ENCODE measurements at regions of chr6 and their contacts with region 1.

Region 1: DNA sequence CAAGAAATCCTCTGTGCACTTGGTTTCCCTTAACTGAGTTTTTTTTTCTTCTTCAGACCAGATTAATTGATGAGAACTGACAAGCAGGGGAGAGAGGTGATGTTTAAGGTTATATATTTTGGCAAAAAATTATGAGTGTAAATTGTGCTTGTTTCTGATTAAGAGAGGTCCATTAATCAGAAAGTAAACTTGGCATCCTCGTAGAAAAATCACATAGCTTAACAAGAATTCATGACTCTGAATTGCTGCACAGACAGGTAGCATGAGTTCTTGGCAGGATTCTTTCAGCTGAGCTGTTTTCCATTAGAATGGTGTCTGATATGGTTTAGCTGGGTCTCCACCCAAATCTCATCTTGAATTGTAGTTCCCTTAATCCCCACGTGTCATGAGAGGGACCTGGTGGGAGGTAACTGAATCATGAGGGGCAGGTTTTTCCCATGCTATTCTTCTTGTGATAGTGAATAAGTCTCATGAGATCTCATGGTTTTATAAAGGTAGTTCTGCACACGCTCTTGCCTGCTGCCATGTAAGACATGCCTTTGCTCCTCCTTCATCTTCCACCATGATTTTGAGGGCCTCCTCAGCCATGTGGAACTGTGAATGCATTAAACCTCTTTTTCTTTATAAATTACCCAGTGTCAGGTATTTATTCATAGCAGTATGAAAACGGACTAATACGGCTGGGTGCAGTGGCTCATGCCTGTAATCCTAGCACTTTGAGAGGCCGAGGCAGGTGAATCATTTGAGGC is 34.2 kb upstream of the DDR1 start:
- DNase-seq: no peak
- ATAC-seq: no peak
- H3K4me3 Mint-ChIP-seq: no peak overlapping the region
- H3K27ac Mint-ChIP-seq: no peak overlapping the region
- H3K4me1 Mint-ChIP-seq: no peaks in the 10 kb centered on the region
- H3K27me3 Mint-ChIP-seq: peaks cover 3% of the 10 kb centered on the region
- CTCF ChIP-seq: no peak

Region 2: DNA sequence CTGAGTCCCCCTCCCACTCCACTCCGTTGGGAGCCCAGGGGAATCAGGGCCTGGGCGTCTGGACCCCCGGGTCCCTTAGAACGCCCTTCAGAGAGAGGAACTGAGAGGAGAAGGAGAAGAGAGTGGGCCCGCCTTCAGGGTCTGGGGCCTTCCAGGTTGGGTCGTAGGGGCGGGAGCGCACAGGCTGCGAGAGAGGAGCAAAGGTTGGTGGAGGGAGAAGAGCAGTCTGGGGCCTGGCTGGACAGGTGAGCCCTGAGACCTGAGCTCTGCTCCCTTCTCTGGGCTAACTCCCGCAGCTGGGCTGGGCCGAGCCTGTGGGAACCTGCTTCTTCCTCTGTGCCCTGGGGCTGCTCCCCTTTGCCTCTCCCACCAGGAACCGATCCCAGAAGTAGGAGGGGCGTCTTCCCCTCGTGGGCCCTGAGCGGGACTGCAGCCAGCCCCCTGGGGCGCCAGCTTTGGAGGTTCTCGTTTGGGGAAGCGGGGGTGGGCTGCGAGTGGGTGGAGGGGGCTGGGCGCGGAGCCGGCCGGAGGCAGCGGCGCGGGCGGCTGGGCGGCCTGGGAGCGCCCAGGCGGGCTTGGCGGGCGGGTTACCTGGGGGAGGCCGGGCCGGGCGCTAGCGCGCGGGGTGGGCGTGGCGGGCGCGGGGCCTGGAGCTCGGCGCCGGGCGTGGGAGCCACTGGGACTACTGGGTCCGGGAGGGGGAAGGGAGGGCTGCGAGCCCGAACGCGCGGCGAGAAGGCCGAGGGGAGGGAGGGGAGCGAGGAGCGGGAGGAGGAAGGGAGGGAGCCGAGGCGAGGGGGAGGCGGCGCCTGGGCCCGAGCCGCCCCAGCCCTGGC is 33.8 kb after region 1 on chr6 and contains the start of gene DDR1:
- CTCF ChIA-PET with region 1: no interaction called
- POLR2A ChIA-PET with region 1: interaction called, 12 read pairs
- intact Hi-C with region 1: no loop called
- DNase-seq: peak; percentile 47
- ATAC-seq: peak; percentile 59
- H3K4me3 Mint-ChIP-seq: peak within 1 kb of the TSS; percentile 84
- H3K27ac Mint-ChIP-seq: peak within 1 kb of the TSS; percentile 80
- H3K4me1 Mint-ChIP-seq: peaks cover 64% of the 10 kb centered on the region
- H3K27me3 Mint-ChIP-seq: no peaks in the 10 kb centered on the region
- CTCF ChIP-seq: no peak
- total RNA-seq, gene DDR1: 16.8 and 18.7 TPM in 2 replicates

Region 3: GRCh38 chr6:32046450-32047083 is 1196.5 kb after region 1 on chr6:
- CTCF ChIA-PET with region 1: no interaction called
- POLR2A ChIA-PET with region 1: no interaction called
- intact Hi-C with region 1: no loop called
- DNase-seq: no peak
- ATAC-seq: no peak
- H3K4me3 Mint-ChIP-seq: no peak overlapping the region
- H3K27ac Mint-ChIP-seq: no peak overlapping the region
- H3K4me1 Mint-ChIP-seq: peaks cover 4% of the 10 kb centered on the region
- H3K27me3 Mint-ChIP-seq: peaks cover 5% of the 10 kb centered on the region
- CTCF ChIP-seq: no peak

Measured in activated B cell treated with CpG ODN at 0.5 μM for 24 hours (primary cell).